Naive thymus-derived CD8-positive, alpha-beta T cell (primary cell): ENCODE measurements at regions of chr5 and their contacts with region 1.

Region 1: DNA sequence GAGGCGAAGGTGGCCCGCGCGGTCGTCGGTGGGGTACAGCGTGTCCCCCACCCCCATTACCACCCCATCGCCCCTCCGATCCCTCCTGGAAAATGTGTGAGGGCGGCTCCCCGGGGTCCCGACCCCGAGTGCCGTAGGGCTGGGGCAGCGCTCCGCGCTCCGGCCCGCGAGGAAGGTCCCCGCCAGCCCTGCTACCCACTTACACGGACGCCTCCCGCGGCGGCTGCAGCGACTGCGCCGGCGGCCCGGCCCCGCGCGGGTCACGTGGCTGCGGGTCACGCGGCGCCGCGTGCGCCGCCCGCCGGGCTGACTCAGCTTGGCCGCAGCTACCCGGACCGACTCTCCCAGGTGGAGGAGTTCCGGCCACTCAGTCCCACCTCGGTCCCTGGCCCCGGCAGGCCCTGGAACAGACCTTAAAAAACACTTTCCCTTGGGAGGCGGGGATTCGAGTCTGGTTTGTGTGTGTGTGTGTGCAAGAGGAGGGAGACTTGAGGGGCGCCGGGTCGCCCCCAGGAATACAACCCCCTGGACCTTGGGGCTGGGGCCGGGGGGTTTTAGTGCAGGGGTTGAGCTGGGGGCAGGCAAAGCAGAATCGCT is at the start of gene GNPDA1:
- DNase-seq: peak; percentile 28 to 70 (median 59)
- ATAC-seq: peak; percentile 68 to 75
- H3K4me3 Mint-ChIP-seq: peak within 1 kb of the TSS; percentile 79 to 91 (median 87)
- H3K27ac Mint-ChIP-seq: peak within 1 kb of the TSS; percentile 87 to 96 (median 92)
- H3K4me1 Mint-ChIP-seq: peaks cover 22 to 80% (median 64%) of the 10 kb centered on the region in 4 donors
- H3K27me3 Mint-ChIP-seq: no peaks in the 10 kb centered on the region
- polyA plus RNA-seq, gene GNPDA1: 40.9 to 51.0 (median 43.9) TPM

Region 2: DNA sequence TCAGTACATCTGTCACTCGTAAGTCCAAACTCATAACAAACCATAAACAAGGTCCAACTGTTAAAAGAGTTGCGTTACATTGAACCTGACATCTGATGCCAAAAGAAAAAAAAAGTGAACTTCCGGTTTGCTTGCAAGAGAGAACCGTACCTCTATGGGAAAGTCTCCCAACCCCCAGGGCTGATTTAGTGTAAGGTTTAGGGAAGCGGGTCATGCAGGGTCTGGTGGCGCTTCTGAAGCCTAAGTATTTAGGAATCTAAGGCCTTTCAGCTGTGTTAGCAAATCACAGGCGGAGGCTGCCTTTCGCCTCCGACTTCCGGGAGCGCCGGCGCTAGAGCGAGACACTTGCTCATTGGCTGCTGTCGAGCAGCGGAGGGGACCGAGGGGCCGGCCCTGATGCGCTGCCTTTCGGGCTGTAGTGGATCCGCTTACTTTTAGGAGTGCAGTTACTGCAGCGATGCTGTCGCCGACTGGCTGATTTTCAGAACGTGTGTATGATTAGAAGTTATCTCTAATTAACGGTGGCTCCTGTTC is 11.9 kb after region 1 on chr5:
- POLR2A ChIA-PET with region 1: interaction called, 23 read pairs
- DNase-seq: peak; percentile 72 to 90 (median 80)
- ATAC-seq: peak; percentile 100
- H3K4me3 Mint-ChIP-seq: peak overlapping the region; percentile 82 to 96 (median 90)
- H3K27ac Mint-ChIP-seq: peak overlapping the region; percentile 90 to 100 (median 99)
- H3K4me1 Mint-ChIP-seq: peaks cover 8 to 20% (median 17%) of the 10 kb centered on the region in 4 donors
- H3K27me3 Mint-ChIP-seq: peaks cover 0 to 7% (median 0%) of the 10 kb centered on the region in 5 donors

Region 3: GRCh38 chr5:142046191-142046590 is 33.3 kb after region 1 on chr5:
- POLR2A ChIA-PET with region 1: no interaction called
- DNase-seq: no peak
- ATAC-seq: no peak
- H3K4me3 Mint-ChIP-seq: no peak overlapping the region
- H3K27ac Mint-ChIP-seq: no peak overlapping the region
- H3K4me1 Mint-ChIP-seq: peaks cover 0 to 6% (median 2%) of the 10 kb centered on the region in 4 donors
- H3K27me3 Mint-ChIP-seq: peaks cover 0 to 5% (median 0%) of the 10 kb centered on the region in 5 donors

Region 4: GRCh38 chr5:142095651-142096330 is 82.9 kb after region 1 on chr5:
- POLR2A ChIA-PET with region 1: interaction called, 10 read pairs
- DNase-seq: peak; percentile 49 to 96 (median 88)
- ATAC-seq: peak; percentile 85 to 92
- H3K4me3 Mint-ChIP-seq: peak overlapping the region; percentile 48 to 85 (median 64)
- H3K27ac Mint-ChIP-seq: peak overlapping the region; percentile 82 to 99 (median 96)
- H3K4me1 Mint-ChIP-seq: peaks cover 21 to 69% (median 63%) of the 10 kb centered on the region in 4 donors
- H3K27me3 Mint-ChIP-seq: no peaks in the 10 kb centered on the region